Right lobe of liver (tissue), 6 donors: ENCODE measurements at regions of chr22 and their contacts with region 1.

Region 1: GRCh38 chr22:33579448-33580093 is 340.7 kb downstream of the LARGE1 start:
- DNase-seq: peak in 2 of 3 donors; percentile 31 to 70
- ATAC-seq: peak; percentile 92 to 97 (median 96)
- H3K4me3 ChIP-seq: no peak overlapping the region
- H3K27ac ChIP-seq: no peak overlapping the region
- H3K4me1 ChIP-seq: peaks cover 0 to 17% (median 5%) of the 10 kb centered on the region in 4 donors
- H3K27me3 ChIP-seq: no peaks in the 10 kb centered on the region
- CTCF ChIP-seq: peak; percentile 90 to 96 (median 94)
- POLR2A ChIP-seq: no peak

Region 2: GRCh38 chr22:33302049-33302545 is 277.5 kb before region 1 on chr22:
- intact Hi-C with region 1: loop called (anchors 10 kb)
- DNase-seq: peak; percentile 87 to 92 (median 90)
- ATAC-seq: peak; percentile 97 to 98 (median 98)
- H3K4me3 ChIP-seq: peak overlapping the region; percentile 32 to 48 (median 44)
- H3K27ac ChIP-seq: peak overlapping the region; percentile 43 to 73 (median 61)
- H3K4me1 ChIP-seq: peaks cover 0 to 14% (median 6%) of the 10 kb centered on the region in 4 donors
- H3K27me3 ChIP-seq: no peaks in the 10 kb centered on the region
- CTCF ChIP-seq: peak; percentile 94 to 99 (median 96)
- POLR2A ChIP-seq: no peak

Region 3: DNA sequence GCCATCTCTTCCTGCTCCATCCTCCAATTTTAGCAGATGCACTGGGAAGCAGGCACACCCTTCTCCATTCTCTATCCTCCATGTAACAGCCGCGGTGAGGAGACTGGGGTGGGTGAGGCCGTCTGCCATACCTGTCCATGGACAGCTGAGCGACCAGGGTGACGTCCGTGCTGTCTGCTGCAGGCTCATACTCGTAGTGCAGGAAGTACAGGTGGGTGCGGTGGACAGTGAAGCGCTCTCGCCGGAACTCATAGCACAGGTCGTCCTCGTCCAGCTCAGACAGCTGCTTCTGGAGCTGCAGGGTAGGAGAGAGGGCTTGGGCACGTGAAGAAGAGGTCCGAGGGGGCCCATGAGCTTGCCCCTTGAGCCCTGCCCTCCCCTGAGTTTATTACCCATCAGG is 263.6 kb before region 1 on chr22:
- intact Hi-C with region 1: no loop called
- DNase-seq: no peak
- ATAC-seq: no peak
- H3K4me3 ChIP-seq: no peak overlapping the region
- H3K27ac ChIP-seq: no peak overlapping the region
- H3K4me1 ChIP-seq: no peaks in the 10 kb centered on the region
- H3K27me3 ChIP-seq: no peaks in the 10 kb centered on the region
- CTCF ChIP-seq: no peak
- POLR2A ChIP-seq: no peak

Region 4: DNA sequence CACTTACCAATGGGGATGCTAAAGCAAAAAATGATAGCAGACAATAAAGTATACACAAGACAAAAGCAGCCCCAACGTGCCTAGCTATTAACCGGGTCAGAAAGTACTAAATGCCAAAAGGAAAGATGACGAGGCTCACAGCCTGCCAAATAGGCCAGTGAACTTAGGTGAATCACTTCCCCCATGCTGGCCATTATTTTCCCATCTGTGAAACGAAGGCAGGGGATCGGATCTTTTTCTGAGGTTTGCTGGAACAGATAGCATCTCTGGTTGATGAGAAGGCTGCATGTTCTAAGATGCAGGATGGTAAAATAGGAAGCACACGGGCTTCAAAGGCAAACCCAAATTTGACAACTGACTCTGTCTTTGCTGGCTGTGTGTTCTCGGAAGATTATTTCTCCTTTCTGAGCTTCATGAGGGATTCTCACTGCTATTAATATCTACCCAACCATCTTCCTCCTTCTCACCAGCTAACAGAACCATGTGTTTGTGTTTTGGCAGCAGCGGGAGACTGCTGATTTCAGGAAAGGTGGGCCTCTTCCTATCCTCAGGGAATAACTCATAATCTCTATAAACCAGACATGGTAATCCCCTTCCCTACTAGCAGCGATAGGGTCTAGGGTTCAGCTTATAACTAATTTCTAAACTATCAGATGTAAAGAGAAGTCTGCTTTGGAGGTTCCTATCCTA is 50.0 kb before region 1 on chr22:
- intact Hi-C with region 1: loop called (anchors 10 kb)
- DNase-seq: no peak
- ATAC-seq: peak in 3 of 4 donors; percentile 30 to 93 (median 50)
- H3K4me3 ChIP-seq: no peak overlapping the region
- H3K27ac ChIP-seq: no peak overlapping the region
- H3K4me1 ChIP-seq: no peaks in the 10 kb centered on the region
- H3K27me3 ChIP-seq: no peaks in the 10 kb centered on the region
- CTCF ChIP-seq: no peak
- POLR2A ChIP-seq: no peak

Region 5: DNA sequence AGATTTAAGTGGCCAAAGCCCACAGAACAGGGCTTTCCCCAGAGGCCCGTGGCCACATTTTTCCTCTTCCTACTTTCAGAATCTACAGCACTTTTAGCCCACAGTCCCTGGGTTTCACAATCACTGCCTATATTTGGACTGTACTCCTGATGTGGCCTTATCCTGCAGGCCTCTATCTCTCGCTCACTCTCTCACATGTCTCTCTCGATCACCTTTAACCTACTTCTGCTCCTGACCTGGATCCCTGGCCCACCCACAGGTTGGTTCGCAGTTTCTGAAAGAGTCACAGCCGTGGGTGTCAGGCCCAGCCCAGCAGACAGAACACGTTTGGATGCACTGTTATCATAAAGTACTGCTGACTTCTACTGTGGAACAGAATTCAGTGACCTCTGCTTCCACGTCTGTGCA is 285.2 kb after region 1 on chr22:
- intact Hi-C with region 1: no loop called
- DNase-seq: peak in 2 of 3 donors; percentile 43 to 55
- ATAC-seq: peak; percentile 86 to 91 (median 87)
- H3K4me3 ChIP-seq: no peak overlapping the region
- H3K27ac ChIP-seq: peak overlapping the region; percentile 43 to 56 (median 53)
- H3K4me1 ChIP-seq: peaks cover 0 to 19% (median 8%) of the 10 kb centered on the region in 4 donors
- H3K27me3 ChIP-seq: no peaks in the 10 kb centered on the region
- CTCF ChIP-seq: no peak
- POLR2A ChIP-seq: no peak